Naive thymus-derived CD4-positive, alpha-beta T cell (primary cell): ENCODE measurements at regions of chr15 and their contacts with region 1.

Region 1: GRCh38 chr15:67839929-67840748 is at the start of gene RNU6-1:
- DNase-seq: peak; percentile 91 to 99 (median 97)
- ATAC-seq: peak; percentile 93
- H3K4me3 ChIP-seq: peak within 1 kb of the TSS; percentile 82
- H3K4me3 Mint-ChIP-seq: peak within 1 kb of the TSS; percentile 82 to 97 (median 94)
- H3K27ac ChIP-seq: peak within 1 kb of the TSS; percentile 96
- H3K27ac Mint-ChIP-seq: peak within 1 kb of the TSS; percentile 95 to 100 (median 99)
- H3K4me1 ChIP-seq: peaks cover 18 to 21% of the 10 kb centered on the region in 2 donors
- H3K4me1 Mint-ChIP-seq: peaks cover 17 to 51% (median 25%) of the 10 kb centered on the region in 7 donors
- H3K27me3 ChIP-seq: peaks cover 0 to 7% of the 10 kb centered on the region in 2 donors
- H3K27me3 Mint-ChIP-seq: peaks cover 2 to 40% (median 7%) of the 10 kb centered on the region in 5 donors
- total RNA-seq, gene RNU6-1: not detected

Region 2: GRCh38 chr15:66700802-66701421 is 1139.2 kb before region 1 on chr15:
- CTCF ChIA-PET with region 1: no interaction called
- POLR2A ChIA-PET with region 1: no interaction called
- intact Hi-C with region 1: loop called (anchors 5 kb)
- DNase-seq: peak; percentile 66 to 91 (median 83)
- ATAC-seq: peak; percentile 92
- H3K4me3 ChIP-seq: peak overlapping the region; percentile 76
- H3K4me3 Mint-ChIP-seq: peak overlapping the region; percentile 87 to 95 (median 93)
- H3K27ac ChIP-seq: peak overlapping the region; percentile 66
- H3K27ac Mint-ChIP-seq: peak overlapping the region in 8 of 9 donors; percentile 18 to 92 (median 78)
- H3K4me1 ChIP-seq: peaks cover 6 to 13% of the 10 kb centered on the region in 2 donors
- H3K4me1 Mint-ChIP-seq: peaks cover 10 to 25% (median 19%) of the 10 kb centered on the region in 7 donors
- H3K27me3 ChIP-seq: peaks cover 5 to 7% of the 10 kb centered on the region in 2 donors
- H3K27me3 Mint-ChIP-seq: peaks cover 6 to 26% (median 17%) of the 10 kb centered on the region in 5 donors

Region 3: DNA sequence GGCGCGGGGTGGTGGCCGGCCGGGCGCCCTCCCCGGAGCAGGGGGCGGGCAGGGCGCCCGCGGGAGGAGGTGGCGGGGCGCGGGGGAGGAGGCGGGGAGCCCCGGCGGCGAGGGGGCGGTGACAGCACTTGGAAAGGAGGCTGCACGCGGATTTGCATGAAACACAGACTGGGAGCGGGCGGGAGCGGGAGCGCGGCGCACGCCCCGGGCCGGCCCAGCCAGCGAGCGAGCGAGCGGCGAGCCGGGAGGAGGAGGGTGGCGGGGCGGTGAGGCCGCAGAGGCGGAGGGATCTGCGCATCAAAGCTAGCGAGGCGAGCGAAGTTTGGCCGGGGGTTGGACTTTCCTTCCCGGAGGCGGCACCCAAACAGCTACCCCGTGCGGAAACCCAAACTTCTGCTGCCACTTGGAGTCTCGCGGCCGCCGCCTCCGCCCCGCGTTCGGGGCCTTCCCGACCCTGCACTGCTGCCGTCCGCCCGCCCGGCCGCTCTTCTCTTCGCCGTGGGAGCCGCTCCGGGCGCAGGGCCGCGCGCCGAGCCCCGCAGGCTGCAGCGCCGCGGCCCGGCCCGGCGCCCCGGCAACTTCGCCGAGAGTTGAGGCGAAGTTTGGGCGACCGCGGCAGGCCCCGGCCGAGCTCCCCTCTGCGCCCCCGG is 774.6 kb before region 1 on chr15 and contains the start of gene SMAD3:
- CTCF ChIA-PET with region 1: no interaction called
- POLR2A ChIA-PET with region 1: no interaction called
- intact Hi-C with region 1: loop called in 1 of 2 experiments (anchors 10 kb)
- DNase-seq: peak; percentile 28 to 82 (median 58)
- ATAC-seq: peak; percentile 78
- H3K4me3 ChIP-seq: peak within 1 kb of the TSS; percentile 79
- H3K4me3 Mint-ChIP-seq: peak within 1 kb of the TSS; percentile 90 to 100 (median 94)
- H3K27ac ChIP-seq: peak within 1 kb of the TSS; percentile 68
- H3K27ac Mint-ChIP-seq: peak within 1 kb of the TSS; percentile 53 to 96 (median 91)
- H3K4me1 ChIP-seq: peaks cover 20 to 51% of the 10 kb centered on the region in 2 donors
- H3K4me1 Mint-ChIP-seq: peaks cover 37 to 67% (median 56%) of the 10 kb centered on the region in 7 donors
- H3K27me3 ChIP-seq: no peaks in the 10 kb centered on the region
- H3K27me3 Mint-ChIP-seq: peaks cover 0 to 14% (median 0%) of the 10 kb centered on the region in 5 donors
- total RNA-seq, gene SMAD3: 27.4 to 142 (median 113) TPM

Region 4: GRCh38 chr15:67501177-67501835 is 338.8 kb before region 1 on chr15:
- CTCF ChIA-PET with region 1: interaction called, 8 read pairs
- POLR2A ChIA-PET with region 1: interaction called, 4 read pairs
- intact Hi-C with region 1: loop called in 1 of 2 experiments (anchors 1 kb)
- DNase-seq: peak in 4 of 9 donors; percentile 6 to 27 (median 17)
- ATAC-seq: peak; percentile 55
- H3K4me3 ChIP-seq: no peak overlapping the region
- H3K4me3 Mint-ChIP-seq: no peak overlapping the region
- H3K27ac ChIP-seq: no peak overlapping the region
- H3K27ac Mint-ChIP-seq: no peak overlapping the region
- H3K4me1 ChIP-seq: no peaks in the 10 kb centered on the region
- H3K4me1 Mint-ChIP-seq: peaks cover 0 to 5% (median 0%) of the 10 kb centered on the region in 7 donors
- H3K27me3 ChIP-seq: peaks cover 0 to 2% of the 10 kb centered on the region in 2 donors
- H3K27me3 Mint-ChIP-seq: peaks cover 0 to 9% (median 0%) of the 10 kb centered on the region in 5 donors

Region 5: GRCh38 chr15:67784090-67784781 is 55.9 kb before region 1 on chr15:
- CTCF ChIA-PET with region 1: interaction called, 6 read pairs
- POLR2A ChIA-PET with region 1: interaction called, 4 read pairs
- intact Hi-C with region 1: loop called (anchors 1 to 5 kb)
- DNase-seq: peak in 3 of 9 donors; percentile 3 to 9 (median 8)
- ATAC-seq: peak; percentile 57
- H3K4me3 ChIP-seq: no peak overlapping the region
- H3K4me3 Mint-ChIP-seq: peak overlapping the region; percentile 9 to 70 (median 32)
- H3K27ac ChIP-seq: no peak overlapping the region
- H3K27ac Mint-ChIP-seq: peak overlapping the region; percentile 7 to 86 (median 51)
- H3K4me1 ChIP-seq: peaks cover 5 to 20% of the 10 kb centered on the region in 2 donors
- H3K4me1 Mint-ChIP-seq: peaks cover 15 to 39% (median 35%) of the 10 kb centered on the region in 7 donors
- H3K27me3 ChIP-seq: no peaks in the 10 kb centered on the region
- H3K27me3 Mint-ChIP-seq: no peaks in the 10 kb centered on the region

Region 6: GRCh38 chr15:67892559-67893377 is 52.6 kb after region 1 on chr15:
- CTCF ChIA-PET with region 1: no interaction called
- POLR2A ChIA-PET with region 1: no interaction called
- intact Hi-C with region 1: no loop called
- DNase-seq: no peak
- ATAC-seq: no peak
- H3K4me3 ChIP-seq: no peak overlapping the region
- H3K4me3 Mint-ChIP-seq: no peak overlapping the region
- H3K27ac ChIP-seq: no peak overlapping the region
- H3K27ac Mint-ChIP-seq: no peak overlapping the region
- H3K4me1 ChIP-seq: no peaks in the 10 kb centered on the region
- H3K4me1 Mint-ChIP-seq: no peaks in the 10 kb centered on the region
- H3K27me3 ChIP-seq: no peaks in the 10 kb centered on the region
- H3K27me3 Mint-ChIP-seq: peaks cover 2 to 18% (median 5%) of the 10 kb centered on the region in 5 donors

Region 7: DNA sequence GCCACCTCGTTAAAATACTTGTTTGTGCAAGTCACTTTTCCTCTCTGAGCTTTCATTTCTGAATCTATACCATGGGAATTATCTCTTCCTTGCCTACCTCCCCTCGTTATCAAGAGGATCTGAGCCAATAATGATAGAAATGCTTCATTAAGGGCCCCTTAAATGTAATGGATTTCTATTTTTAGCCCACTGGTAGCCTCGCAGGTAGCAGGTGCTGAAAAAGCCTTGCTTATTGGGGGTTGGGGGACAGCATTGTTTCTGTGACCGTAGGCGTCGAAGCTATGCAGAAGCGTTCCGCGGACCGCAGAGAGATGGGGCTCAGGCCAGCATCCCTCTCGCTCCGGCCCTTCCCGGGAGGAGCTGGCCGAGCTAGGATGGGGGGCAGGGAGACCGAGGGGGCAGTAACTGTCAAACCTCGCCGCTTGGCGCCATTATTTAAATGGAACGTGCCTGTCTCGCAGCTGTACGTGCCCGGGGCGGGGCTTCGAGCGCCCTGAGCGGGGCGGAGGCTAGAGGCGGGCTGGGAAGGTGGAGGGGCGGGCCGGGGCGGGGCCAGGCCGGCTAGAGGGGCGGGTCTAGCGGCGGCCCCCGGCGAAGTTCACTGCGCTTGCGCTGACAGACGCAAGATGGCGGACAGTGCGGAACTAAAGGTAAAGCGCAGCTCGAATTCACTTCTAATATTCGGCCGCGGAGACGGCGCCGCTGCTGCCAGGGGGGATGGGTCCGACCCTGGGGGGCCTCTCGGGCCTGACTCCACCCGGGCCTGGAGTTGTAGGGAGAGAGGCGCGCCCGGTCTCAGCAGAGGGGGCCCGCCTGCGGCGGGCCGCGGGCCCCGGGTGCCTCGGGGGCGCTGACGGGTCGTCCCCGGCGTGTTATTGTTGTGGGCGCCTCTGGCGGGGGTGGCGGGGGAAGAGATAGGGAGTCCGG is 213.8 kb after region 1 on chr15 and contains the start of gene PIAS1:
- CTCF ChIA-PET with region 1: no interaction called
- POLR2A ChIA-PET with region 1: interaction called, 5 read pairs
- intact Hi-C with region 1: loop called (anchors 1 kb)
- DNase-seq: peak; percentile 87 to 94 (median 92)
- ATAC-seq: peak; percentile 96
- H3K4me3 ChIP-seq: peak within 1 kb of the TSS; percentile 87
- H3K4me3 Mint-ChIP-seq: peak within 1 kb of the TSS; percentile 89 to 97 (median 95)
- H3K27ac ChIP-seq: peak within 1 kb of the TSS; percentile 93
- H3K27ac Mint-ChIP-seq: peak within 1 kb of the TSS; percentile 84 to 97 (median 92)
- H3K4me1 ChIP-seq: peaks cover 21 to 35% of the 10 kb centered on the region in 2 donors
- H3K4me1 Mint-ChIP-seq: peaks cover 28 to 46% (median 39%) of the 10 kb centered on the region in 7 donors
- H3K27me3 ChIP-seq: no peaks in the 10 kb centered on the region
- H3K27me3 Mint-ChIP-seq: peaks cover 0 to 15% (median 0%) of the 10 kb centered on the region in 5 donors
- total RNA-seq, gene PIAS1: 41.3 to 103 (median 90.9) TPM

Region 8: DNA sequence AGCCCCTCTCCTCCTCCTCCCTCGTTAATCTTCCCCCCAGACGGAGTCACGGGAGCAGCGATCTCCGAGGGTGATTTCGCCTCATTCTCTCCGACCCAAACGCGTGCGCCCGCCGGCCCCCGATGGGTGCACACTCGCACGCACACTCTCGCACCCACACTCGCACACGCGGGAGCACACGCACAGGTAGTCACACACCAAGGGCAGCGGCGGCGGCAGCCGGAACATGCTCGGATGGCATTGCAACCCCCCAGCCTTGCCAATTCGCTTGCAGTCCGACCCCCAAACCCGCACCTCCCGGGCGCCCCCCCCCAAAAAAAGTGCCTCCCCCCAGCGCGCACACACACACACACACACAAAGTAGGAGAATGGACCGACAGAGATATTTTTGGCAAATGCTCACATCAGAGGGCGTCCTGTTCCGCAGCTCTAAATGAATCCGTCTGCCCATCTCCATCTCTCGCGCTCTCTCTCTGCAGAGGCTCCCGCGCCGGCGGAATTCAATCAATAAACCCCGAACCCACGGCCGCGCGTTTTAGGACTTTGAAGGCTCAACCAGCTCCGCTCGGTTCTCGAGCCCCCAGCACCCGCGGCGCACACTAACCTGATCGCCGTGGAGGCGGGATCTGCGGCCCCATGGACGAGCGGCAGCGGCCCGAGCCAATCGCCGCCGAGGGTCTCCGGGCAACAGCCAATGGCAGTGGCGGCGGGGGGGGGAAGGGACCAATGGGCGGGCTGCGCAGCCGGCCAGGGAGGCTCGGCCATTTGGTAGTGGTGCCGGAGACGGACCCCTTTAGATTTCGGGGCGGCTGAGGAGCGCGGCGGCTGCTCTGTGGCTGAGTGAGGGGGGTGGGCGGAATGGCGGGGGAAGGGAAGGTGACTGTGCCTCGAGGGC is 980.4 kb after region 1 on chr15 and contains the start of gene ANP32A:
- CTCF ChIA-PET with region 1: no interaction called
- POLR2A ChIA-PET with region 1: no interaction called
- intact Hi-C with region 1: loop called in 1 of 2 experiments (anchors 2 kb)
- DNase-seq: peak; percentile 90 to 99 (median 95)
- ATAC-seq: peak; percentile 85
- H3K4me3 ChIP-seq: peak within 1 kb of the TSS; percentile 99
- H3K4me3 Mint-ChIP-seq: peak within 1 kb of the TSS; percentile 85 to 100 (median 92)
- H3K27ac ChIP-seq: peak within 1 kb of the TSS; percentile 91
- H3K27ac Mint-ChIP-seq: peak within 1 kb of the TSS; percentile 84 to 100 (median 92)
- H3K4me1 ChIP-seq: peaks cover 19 to 23% of the 10 kb centered on the region in 2 donors
- H3K4me1 Mint-ChIP-seq: peaks cover 22 to 37% (median 34%) of the 10 kb centered on the region in 7 donors
- H3K27me3 ChIP-seq: no peaks in the 10 kb centered on the region
- H3K27me3 Mint-ChIP-seq: no peaks in the 10 kb centered on the region
- total RNA-seq, gene ANP32A: 86.1 to 229 (median 136) TPM